ENCODE measurements at regions of chr3 and their contacts with region 1.

Region 1: GRCh38 chr3:189512039-189512438 is 119.2 kb upstream of the TP63 start:
- DNase-seq: no peak
- H3K4me3 ChIP-seq: no peak overlapping the region
- H3K27ac ChIP-seq: peak overlapping the region; percentile 61; the same call in 1 of the 2 replicates
- H3K4me1 ChIP-seq: peaks cover 27% of the 10 kb centered on the region
- H3K27me3 ChIP-seq: no peaks in the 10 kb centered on the region
- CTCF ChIP-seq: no peak

Region 2: GRCh38 chr3:189394599-189395121 is 117.4 kb before region 1 on chr3:
- CTCF ChIA-PET with region 1: interaction called, 4 read pairs
- POLR2A ChIA-PET with region 1: no interaction called
- intact Hi-C with region 1: loop called (anchors 2 kb)
- DNase-seq: no peak
- H3K4me3 ChIP-seq: no peak overlapping the region
- H3K27ac ChIP-seq: peak overlapping the region; percentile 89
- H3K4me1 ChIP-seq: peaks cover 36% of the 10 kb centered on the region
- H3K27me3 ChIP-seq: no peaks in the 10 kb centered on the region
- CTCF ChIP-seq: no peak

Region 3: DNA sequence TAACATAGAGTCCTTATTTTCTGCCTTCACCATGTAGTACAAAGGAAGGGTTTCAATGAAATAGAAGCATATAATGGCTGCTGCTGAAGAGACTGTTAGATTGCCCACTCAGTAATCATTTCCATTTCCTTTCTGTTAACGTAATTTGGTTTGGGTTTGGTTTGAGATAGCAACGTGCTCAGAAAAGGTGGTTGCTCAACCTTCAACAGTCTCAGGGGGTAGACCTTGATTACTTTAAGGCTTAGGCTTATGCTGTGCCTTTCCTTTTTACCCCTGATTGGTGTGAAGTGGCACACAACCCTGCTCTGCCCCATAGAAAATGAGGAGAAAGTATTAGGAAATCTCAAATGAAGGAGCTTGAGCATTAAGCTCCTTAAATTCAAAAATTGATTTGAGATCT is 44.6 kb before region 1 on chr3:
- CTCF ChIA-PET with region 1: interaction called, 10 read pairs
- POLR2A ChIA-PET with region 1: no interaction called
- intact Hi-C with region 1: no loop called
- DNase-seq: no peak
- H3K4me3 ChIP-seq: no peak overlapping the region
- H3K27ac ChIP-seq: no peak overlapping the region
- H3K4me1 ChIP-seq: no peaks in the 10 kb centered on the region
- H3K27me3 ChIP-seq: no peaks in the 10 kb centered on the region
- CTCF ChIP-seq: no peak

Region 4: GRCh38 chr3:189598530-189599225 is 86.6 kb after region 1 on chr3:
- CTCF ChIA-PET with region 1: no interaction called
- POLR2A ChIA-PET with region 1: no interaction called
- intact Hi-C with region 1: no loop called
- DNase-seq: no peak
- H3K4me3 ChIP-seq: no peak overlapping the region
- H3K27ac ChIP-seq: no peak overlapping the region
- H3K4me1 ChIP-seq: no peaks in the 10 kb centered on the region
- H3K27me3 ChIP-seq: no peaks in the 10 kb centered on the region
- CTCF ChIP-seq: no peak

Measured in PC-9 (cell line).